IMR-90 (cell line): ENCODE measurements at regions of chr11 and their contacts with region 1.

Region 1: DNA sequence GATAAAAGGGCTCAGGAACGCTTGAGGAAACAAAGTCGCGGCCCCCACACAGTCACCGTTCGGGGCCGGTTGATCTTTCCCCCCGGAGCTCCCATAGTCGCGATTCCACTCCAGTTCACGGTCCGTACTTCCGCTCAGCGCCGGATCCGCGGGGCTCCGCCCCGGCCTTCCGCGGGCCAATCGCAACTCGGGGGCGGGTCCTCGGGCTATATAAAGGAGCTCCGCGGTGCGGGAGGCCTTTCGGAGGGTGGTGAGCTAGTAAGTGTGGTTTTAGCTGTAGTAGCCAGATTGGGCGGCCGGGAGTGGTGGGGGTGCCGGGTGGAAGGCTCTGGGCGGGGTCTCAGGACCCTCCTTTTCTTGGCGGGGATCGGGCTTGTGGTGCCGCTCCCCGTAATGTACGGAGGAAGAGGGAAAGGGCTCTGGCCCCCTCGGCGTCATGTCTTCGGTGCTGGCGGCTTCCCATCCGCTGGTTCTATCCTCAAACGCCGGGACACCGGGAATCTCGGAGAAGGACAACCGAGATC is at the starts of genes C11orf98 and CSKMT:
- DNase-seq: peak; percentile 91
- ATAC-seq: peak; percentile 95
- H3K4me3 ChIP-seq: peak within 1 kb of the TSS; percentile 73
- H3K27ac ChIP-seq: peak within 1 kb of the TSS; percentile 74
- H3K4me1 ChIP-seq: peaks cover 8% of the 10 kb centered on the region
- H3K27me3 ChIP-seq: no peaks in the 10 kb centered on the region
- CTCF ChIP-seq: no peak
- POLR2A ChIP-seq: peak; percentile 100
- RAD21 ChIP-seq: no peak
- total RNA-seq, gene C11orf98: 41.2 and 53.6 TPM in 2 replicates
- total RNA-seq, gene CSKMT: 6.4 and 7.9 TPM in 2 replicates

Region 2: GRCh38 chr11:62678770-62679696 is 13.9 kb after region 1 on chr11 and contains the start of gene UBXN1:
- CTCF ChIA-PET with region 1: interaction called, 3 read pairs
- POLR2A ChIA-PET with region 1: interaction called, 10 read pairs
- dilution Hi-C with region 1: no loop called
- in situ Hi-C with region 1: no loop called
- intact Hi-C with region 1: no loop called
- DNase-seq: peak; percentile 83
- ATAC-seq: peak; percentile 73
- H3K4me3 ChIP-seq: peak within 1 kb of the TSS; percentile 94
- H3K27ac ChIP-seq: peak within 1 kb of the TSS; percentile 96
- H3K4me1 ChIP-seq: peaks cover 8% of the 10 kb centered on the region
- H3K27me3 ChIP-seq: no peaks in the 10 kb centered on the region
- CTCF ChIP-seq: no peak
- POLR2A ChIP-seq: peak; percentile 80
- RAD21 ChIP-seq: no peak
- total RNA-seq, gene UBXN1: 50.0 and 83.0 TPM in 2 replicates

Region 3: DNA sequence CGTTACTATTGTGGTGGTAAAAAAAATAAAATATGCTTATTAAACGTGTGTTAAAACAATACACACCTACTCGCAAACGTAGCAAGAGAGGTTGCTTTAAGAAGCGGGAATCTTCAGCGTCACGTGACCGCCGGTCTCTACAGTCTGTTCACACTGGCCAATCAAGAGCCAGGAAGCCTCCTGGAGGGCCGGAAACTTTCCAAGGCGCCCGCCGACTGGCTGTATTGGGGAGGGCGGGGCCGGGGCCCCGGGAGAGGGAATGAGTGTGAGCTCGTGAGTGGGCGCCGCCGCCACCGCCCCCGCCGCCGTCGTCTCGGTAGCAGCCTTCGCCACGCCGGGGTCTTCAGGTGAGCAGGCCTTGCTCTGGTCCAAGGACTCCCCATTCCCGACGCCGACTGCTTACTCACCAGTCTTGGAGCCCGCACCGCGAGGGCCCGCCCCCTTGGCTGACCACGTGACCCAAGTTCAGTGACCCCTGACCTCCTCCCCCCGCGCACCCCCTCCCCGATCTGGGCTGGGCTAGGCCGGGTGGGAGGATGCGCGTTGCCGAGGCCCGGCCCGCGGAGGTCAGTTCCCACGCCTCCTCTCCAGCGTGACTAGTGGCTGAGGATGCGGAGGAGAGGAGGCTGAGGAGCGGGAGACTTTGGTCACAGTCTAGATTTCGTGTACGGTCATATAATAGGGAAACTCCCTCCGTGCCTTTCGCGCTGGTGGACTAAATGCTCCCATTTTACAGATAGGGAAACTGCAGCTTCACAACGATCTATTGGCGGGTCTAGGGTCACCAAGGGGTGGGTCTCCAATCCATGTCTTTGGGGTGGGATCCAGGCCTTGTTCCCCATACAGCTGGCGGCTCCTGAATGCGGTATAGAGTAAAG is 106.2 kb after region 1 on chr11 and contains the start of gene TAF6L:
- CTCF ChIA-PET with region 1: no interaction called
- POLR2A ChIA-PET with region 1: interaction called, 13 read pairs
- dilution Hi-C with region 1: no loop called
- in situ Hi-C with region 1: no loop called
- intact Hi-C with region 1: no loop called
- DNase-seq: peak; percentile 95
- ATAC-seq: peak; percentile 99
- H3K4me3 ChIP-seq: peak within 1 kb of the TSS; percentile 81
- H3K27ac ChIP-seq: peak within 1 kb of the TSS; percentile 96
- H3K4me1 ChIP-seq: peaks cover 3% of the 10 kb centered on the region
- H3K27me3 ChIP-seq: no peaks in the 10 kb centered on the region
- CTCF ChIP-seq: no peak
- POLR2A ChIP-seq: peak; percentile 75
- RAD21 ChIP-seq: no peak
- total RNA-seq, gene TAF6L: 8.1 and 9.5 TPM in 2 replicates

Region 4: GRCh38 chr11:62831520-62832335 is 166.6 kb after region 1 on chr11 and contains the start of gene STX5:
- CTCF ChIA-PET with region 1: no interaction called
- POLR2A ChIA-PET with region 1: no interaction called
- dilution Hi-C with region 1: no loop called
- in situ Hi-C with region 1: no loop called
- intact Hi-C with region 1: no loop called
- DNase-seq: peak; percentile 99
- ATAC-seq: peak; percentile 95
- H3K4me3 ChIP-seq: peak within 1 kb of the TSS; percentile 94
- H3K27ac ChIP-seq: peak within 1 kb of the TSS; percentile 95
- H3K4me1 ChIP-seq: peaks cover 12% of the 10 kb centered on the region
- H3K27me3 ChIP-seq: no peaks in the 10 kb centered on the region
- CTCF ChIP-seq: no peak
- POLR2A ChIP-seq: peak; percentile 96
- RAD21 ChIP-seq: no peak
- total RNA-seq, gene STX5: 48.6 and 49.5 TPM in 2 replicates

Region 5: GRCh38 chr11:62855571-62856332 is 190.6 kb after region 1 on chr11:
- CTCF ChIA-PET with region 1: no interaction called
- POLR2A ChIA-PET with region 1: interaction called, 24 read pairs
- dilution Hi-C with region 1: no loop called
- in situ Hi-C with region 1: no loop called
- intact Hi-C with region 1: no loop called
- DNase-seq: peak; percentile 98
- ATAC-seq: peak; percentile 94
- H3K4me3 ChIP-seq: peak overlapping the region; percentile 72
- H3K27ac ChIP-seq: peak overlapping the region; percentile 89
- H3K4me1 ChIP-seq: peaks cover 2% of the 10 kb centered on the region; the same call in 1 of the 2 replicates
- H3K27me3 ChIP-seq: no peaks in the 10 kb centered on the region
- CTCF ChIP-seq: no peak
- POLR2A ChIP-seq: peak; percentile 100
- RAD21 ChIP-seq: no peak